OCI-LY7 (cell line): ENCODE measurements at regions of chr17 and their contacts with region 1.

Region 1: DNA sequence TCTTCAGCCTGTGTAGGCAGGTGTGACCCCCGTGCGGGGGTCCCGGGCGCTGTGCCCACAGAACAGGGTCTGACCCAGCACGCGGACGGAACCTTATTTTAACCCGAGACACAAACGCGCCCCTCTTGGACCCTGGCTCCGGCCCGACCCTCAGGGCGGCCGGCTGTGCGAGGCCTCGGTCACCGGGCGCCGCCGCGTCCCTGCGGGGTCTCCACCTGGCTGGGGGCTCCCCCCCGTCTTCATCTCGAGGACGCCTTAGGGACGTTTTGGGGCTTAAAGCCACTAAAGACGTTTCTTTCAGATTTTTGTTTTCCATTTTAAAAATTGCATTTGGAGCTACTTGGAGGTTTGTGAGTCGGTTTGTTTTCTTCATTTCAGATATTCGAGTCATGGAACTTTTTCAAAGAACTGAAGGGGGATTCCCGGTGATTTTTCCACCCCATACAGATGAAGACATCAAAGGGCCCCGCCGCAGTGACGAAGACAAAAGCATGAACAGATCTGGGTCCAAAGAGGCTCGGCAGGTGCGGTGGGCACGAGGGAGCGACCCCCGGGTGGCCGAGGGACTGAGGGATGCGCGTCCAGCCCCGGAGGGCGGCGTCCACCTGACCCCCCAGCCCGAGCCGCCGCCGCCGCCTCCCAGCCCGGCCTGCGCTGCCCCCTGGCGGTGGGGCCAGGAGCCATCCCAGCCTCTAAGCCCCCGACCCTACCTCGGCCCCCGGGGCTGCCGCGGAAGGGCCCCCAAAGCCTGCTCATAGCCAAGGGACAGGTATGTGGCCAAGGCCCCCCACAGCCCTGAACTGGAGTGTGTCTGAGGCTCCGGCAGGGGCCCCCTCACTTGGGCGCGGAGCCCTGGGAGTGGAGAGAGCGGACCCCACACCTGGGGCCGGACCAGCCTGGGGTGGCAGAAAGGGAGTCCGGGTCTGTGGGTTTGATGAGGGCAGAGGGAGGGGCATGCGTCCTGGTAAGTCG is 3.8 kb upstream of the CD7 start:
- DNase-seq: peak; percentile 58
- H3K4me3 ChIP-seq: no peak overlapping the region
- H3K27ac ChIP-seq: no peak overlapping the region
- H3K4me1 ChIP-seq: no peaks in the 10 kb centered on the region
- CTCF ChIP-seq: peak; percentile 98

Region 2: DNA sequence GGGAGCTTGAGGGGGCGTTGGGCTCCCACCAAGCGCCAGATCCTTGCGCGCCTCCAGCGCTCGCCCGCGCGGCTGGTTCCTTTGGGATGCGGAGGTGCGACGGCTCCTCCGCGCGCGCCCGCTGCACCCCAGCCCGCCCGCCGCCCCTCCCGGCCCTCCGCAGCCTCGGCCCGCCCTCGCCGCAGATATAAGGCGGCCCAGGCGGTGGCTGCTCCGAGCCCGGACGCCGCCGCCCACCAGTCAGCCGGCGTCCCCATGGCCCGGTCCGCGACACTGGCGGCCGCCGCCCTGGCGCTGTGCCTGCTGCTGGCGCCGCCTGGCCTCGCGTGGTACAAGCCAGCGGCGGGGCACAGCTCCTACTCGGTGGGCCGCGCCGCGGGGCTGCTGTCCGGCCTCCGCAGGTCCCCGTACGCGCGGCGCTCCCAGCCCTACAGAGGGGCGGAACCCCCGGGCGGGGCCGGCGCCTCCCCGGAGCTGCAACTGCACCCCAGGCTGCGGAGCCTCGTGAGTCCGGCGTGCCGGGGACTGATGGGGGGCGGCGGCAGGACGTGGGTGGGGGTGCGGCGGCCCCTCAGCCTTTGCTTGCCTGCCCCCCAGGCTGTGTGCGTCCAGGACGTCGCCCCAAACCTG is 419.1 kb before region 1 on chr17 and contains the start of gene NPB:
- CTCF ChIA-PET with region 1: no interaction called
- POLR2A ChIA-PET with region 1: no interaction called
- intact Hi-C with region 1: no loop called
- DNase-seq: no peak
- H3K4me3 ChIP-seq: no peak within 1 kb of the TSS
- H3K27ac ChIP-seq: no peak within 1 kb of the TSS
- H3K4me1 ChIP-seq: no peaks in the 10 kb centered on the region
- CTCF ChIP-seq: no peak
- total RNA-seq, gene NPB: 3.2 and 3.9 TPM in 2 replicates

Region 3: DNA sequence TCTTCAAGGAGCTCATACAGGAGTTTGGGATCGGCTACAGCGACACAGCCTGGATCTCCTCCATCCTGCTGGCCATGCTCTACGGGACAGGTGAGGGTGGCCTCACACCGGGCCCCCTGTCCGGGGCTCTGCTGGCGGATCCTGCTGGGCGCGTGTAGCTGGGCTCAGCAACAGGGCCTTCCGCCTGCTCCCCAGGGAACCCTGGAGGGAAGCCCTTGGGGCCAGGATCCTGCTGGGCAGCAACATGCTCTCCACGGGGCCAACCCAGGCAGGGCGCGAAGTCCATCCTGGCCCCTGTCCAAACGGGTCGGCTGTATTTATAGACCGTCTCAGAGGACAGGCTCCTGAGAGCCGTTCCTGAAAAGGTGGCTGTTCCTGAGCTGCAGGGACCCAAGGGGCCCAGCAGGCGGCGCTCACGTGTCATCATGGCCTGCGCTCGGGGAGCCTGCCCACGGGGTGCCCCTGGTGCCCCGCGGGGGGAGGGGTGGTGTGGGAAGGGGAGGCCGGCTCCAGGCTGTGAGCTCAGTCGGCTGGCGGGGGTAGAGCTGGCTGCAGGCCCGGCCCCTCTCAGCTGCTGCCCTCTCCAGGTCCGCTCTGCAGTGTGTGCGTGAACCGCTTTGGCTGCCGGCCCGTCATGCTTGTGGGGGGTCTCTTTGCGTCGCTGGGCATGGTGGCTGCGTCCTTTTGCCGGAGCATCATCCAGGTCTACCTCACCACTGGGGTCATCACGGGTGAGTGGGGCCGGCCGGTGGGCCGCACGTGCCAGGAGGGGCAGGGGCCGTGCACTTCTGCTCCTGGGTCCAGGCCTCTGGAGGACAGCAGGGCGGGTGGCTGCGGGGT is 84.9 kb before region 1 on chr17:
- CTCF ChIA-PET with region 1: no interaction called
- POLR2A ChIA-PET with region 1: no interaction called
- intact Hi-C with region 1: loop called (anchors 1 kb)
- DNase-seq: peak; percentile 78
- H3K4me3 ChIP-seq: no peak overlapping the region
- H3K27ac ChIP-seq: no peak overlapping the region
- H3K4me1 ChIP-seq: peaks cover 30% of the 10 kb centered on the region
- CTCF ChIP-seq: peak; percentile 99